ENCODE measurements at regions of chr2 and their contacts with region 1.

Region 1: DNA sequence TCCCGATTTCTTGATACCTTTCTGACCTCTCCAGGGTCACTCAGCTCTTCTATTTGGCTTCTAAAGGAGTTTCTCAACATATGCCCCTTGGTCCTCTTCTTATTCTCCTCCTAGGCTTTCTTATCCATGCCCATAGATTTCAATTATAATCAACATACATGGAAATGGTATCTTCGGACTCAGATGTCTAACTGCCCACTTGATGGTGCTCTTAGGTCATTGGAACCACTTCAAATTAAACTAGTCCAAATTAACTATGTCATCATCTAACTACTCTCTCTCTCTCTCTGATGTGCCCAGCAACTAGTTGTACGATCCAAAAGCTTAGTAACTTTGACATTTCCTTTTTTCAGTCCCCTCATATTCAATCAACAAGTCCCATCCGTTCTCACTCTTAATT is 43.2 kb upstream of the GPR75 start:
- DNase-seq: no peak
- H3K4me3 ChIP-seq: no peak overlapping the region
- H3K27ac ChIP-seq: no peak overlapping the region
- H3K4me1 ChIP-seq: no peaks in the 10 kb centered on the region
- H3K27me3 ChIP-seq: no peaks in the 10 kb centered on the region

Region 2: DNA sequence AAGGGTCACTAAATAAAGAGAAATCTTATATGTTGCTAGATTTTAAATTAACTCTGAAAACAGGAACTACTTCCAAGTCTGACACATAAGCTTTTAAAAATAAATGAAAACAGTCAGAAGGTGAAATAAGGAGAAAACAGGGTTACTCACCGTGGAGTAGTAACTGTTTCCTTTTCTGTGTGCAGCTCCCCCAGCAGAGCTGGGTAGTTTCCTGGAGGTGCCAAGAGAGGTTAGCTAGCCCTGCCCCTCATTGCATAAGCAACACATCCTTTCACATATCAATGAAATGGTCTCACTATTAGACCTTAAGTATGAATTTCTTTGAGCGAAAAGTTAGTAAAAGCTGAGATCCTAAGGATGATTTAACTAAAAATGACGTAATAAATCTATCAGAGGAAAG is 10.7 kb after region 1 on chr2:
- CTCF ChIA-PET with region 1: interaction called, 10 read pairs
- POLR2A ChIA-PET with region 1: interaction called, 4 read pairs
- DNase-seq: peak; percentile 43 to 88 (median 83)
- H3K4me3 ChIP-seq: peak overlapping the region in 2 of 7 experiments; percentile 46 to 56
- H3K27ac ChIP-seq: peak overlapping the region; percentile 33 to 68
- H3K4me1 ChIP-seq: peaks cover 4 to 13% (median 10%) of the 10 kb centered on the region in 4 experiments
- H3K27me3 ChIP-seq: no peaks in the 10 kb centered on the region

Region 3: DNA sequence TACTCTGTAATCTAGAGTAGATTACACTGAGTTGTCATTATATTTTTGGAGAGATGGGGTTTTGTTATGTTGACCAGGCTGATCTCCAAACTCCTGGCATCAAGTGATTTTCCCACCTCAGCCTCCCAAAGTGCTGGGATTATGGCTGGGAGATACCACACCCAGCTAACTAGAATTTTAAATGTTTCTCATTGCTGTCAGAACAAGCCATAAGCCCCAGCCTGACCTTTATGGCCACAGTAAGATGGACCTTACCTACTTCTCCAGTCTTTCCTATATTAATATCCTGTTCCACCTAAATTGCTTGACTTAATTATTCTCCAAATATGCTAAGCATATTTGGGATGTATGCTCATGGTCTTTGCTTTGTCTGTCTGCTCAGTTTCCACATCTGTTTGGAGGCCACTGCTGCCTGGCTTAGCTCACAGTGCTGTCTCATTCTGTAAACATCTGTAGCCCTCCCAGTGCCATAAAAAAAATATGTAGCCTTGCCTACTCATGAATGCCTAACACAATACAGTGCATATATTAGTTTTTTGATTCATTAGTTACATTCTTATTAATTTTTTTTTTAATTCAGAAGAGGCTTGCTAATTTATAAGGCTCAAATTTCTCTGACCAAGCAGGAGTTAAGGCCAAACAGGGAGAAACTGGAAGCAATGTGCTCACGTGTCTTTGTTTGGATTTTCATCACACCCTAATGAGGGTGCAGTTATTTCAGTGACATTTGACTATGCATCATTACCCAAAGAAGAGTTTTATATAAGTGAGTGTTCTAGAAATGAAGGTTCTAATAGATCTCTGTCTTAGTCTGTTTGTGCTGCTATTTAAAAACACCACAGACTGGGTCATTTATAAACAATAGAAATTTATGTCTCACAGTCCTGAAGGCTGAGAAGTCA is 113.0 kb after region 1 on chr2:
- CTCF ChIA-PET with region 1: no interaction called
- POLR2A ChIA-PET with region 1: no interaction called
- DNase-seq: peak in 1 of 3 donors; percentile 10
- H3K4me3 ChIP-seq: no peak overlapping the region
- H3K27ac ChIP-seq: no peak overlapping the region
- H3K4me1 ChIP-seq: peaks cover 0 to 20% (median 12%) of the 10 kb centered on the region in 4 experiments
- H3K27me3 ChIP-seq: no peaks in the 10 kb centered on the region

Measured in common myeloid progenitor, CD34-positive (primary cell).